Caco-2 (cell line): ENCODE measurements at regions of chr9 and their contacts with region 1.

Region 1: GRCh38 chr9:72038890-72039410 is 21.5 kb downstream of the C9orf57 start:
- DNase-seq: peak; percentile 45 to 57
- H3K4me3 ChIP-seq: no peak overlapping the region
- H3K4me3 Mint-ChIP-seq: no peak overlapping the region
- H3K27ac Mint-ChIP-seq: no peak overlapping the region
- H3K4me1 ChIP-seq: no peaks in the 10 kb centered on the region
- H3K4me1 Mint-ChIP-seq: no peaks in the 10 kb centered on the region
- H3K27me3 ChIP-seq: no peaks in the 10 kb centered on the region
- H3K27me3 Mint-ChIP-seq: no peaks in the 10 kb centered on the region
- CTCF ChIP-seq: peak; percentile 47 to 51

Region 2: DNA sequence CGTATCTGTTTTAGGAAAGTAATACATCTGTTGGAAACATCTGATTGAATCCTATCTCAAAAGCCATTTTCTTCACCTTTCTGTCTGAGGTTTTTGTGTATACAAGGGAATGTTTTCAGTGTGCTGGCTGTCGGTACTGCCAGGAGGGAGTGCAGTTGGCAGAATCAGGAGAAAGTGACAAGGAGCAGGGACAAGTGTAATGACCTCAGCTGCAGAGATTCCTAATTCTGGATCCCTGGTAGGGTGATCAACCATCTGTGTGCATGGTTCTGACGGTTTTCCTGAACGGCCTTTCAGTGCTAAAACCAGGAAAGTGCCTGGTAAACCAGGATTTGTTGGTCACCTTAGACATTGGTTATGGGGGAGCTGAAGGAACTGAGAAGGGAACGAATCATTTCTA is 108.7 kb after region 1 on chr9:
- CTCF ChIA-PET with region 1: interaction called, 4 read pairs
- POLR2A ChIA-PET with region 1: no interaction called
- intact Hi-C with region 1: loop called (anchors 1 kb)
- DNase-seq: no peak
- H3K4me3 ChIP-seq: no peak overlapping the region
- H3K4me3 Mint-ChIP-seq: no peak overlapping the region
- H3K27ac Mint-ChIP-seq: no peak overlapping the region
- H3K4me1 ChIP-seq: no peaks in the 10 kb centered on the region
- H3K4me1 Mint-ChIP-seq: no peaks in the 10 kb centered on the region
- H3K27me3 ChIP-seq: no peaks in the 10 kb centered on the region
- H3K27me3 Mint-ChIP-seq: no peaks in the 10 kb centered on the region
- CTCF ChIP-seq: no peak

Region 3: GRCh38 chr9:72203205-72203803 is 164.4 kb after region 1 on chr9:
- CTCF ChIA-PET with region 1: no interaction called
- POLR2A ChIA-PET with region 1: no interaction called
- intact Hi-C with region 1: loop called (anchors 5 kb)
- DNase-seq: peak in 1 of 2 experiments; percentile 11
- H3K4me3 ChIP-seq: no peak overlapping the region
- H3K4me3 Mint-ChIP-seq: no peak overlapping the region
- H3K27ac Mint-ChIP-seq: no peak overlapping the region
- H3K4me1 ChIP-seq: no peaks in the 10 kb centered on the region
- H3K4me1 Mint-ChIP-seq: peaks cover 12% of the 10 kb centered on the region
- H3K27me3 ChIP-seq: no peaks in the 10 kb centered on the region
- H3K27me3 Mint-ChIP-seq: no peaks in the 10 kb centered on the region
- CTCF ChIP-seq: peak; percentile 27 to 37

Region 4: GRCh38 chr9:72271613-72272478 is 232.9 kb after region 1 on chr9:
- CTCF ChIA-PET with region 1: interaction called, 12 read pairs
- POLR2A ChIA-PET with region 1: no interaction called
- intact Hi-C with region 1: loop called (anchors 1 kb)
- DNase-seq: peak in 1 of 2 experiments; percentile 7
- H3K4me3 ChIP-seq: no peak overlapping the region
- H3K4me3 Mint-ChIP-seq: no peak overlapping the region
- H3K27ac Mint-ChIP-seq: no peak overlapping the region
- H3K4me1 ChIP-seq: no peaks in the 10 kb centered on the region
- H3K4me1 Mint-ChIP-seq: no peaks in the 10 kb centered on the region
- H3K27me3 ChIP-seq: no peaks in the 10 kb centered on the region
- H3K27me3 Mint-ChIP-seq: no peaks in the 10 kb centered on the region
- CTCF ChIP-seq: peak in 1 of 2 experiments; percentile 43

Region 5: GRCh38 chr9:72396247-72397091 is 357.5 kb after region 1 on chr9:
- CTCF ChIA-PET with region 1: no interaction called
- POLR2A ChIA-PET with region 1: no interaction called
- intact Hi-C with region 1: no loop called
- DNase-seq: peak in 1 of 2 experiments; percentile 0
- H3K4me3 ChIP-seq: no peak overlapping the region
- H3K4me3 Mint-ChIP-seq: no peak overlapping the region
- H3K27ac Mint-ChIP-seq: no peak overlapping the region
- H3K4me1 ChIP-seq: no peaks in the 10 kb centered on the region
- H3K4me1 Mint-ChIP-seq: no peaks in the 10 kb centered on the region
- H3K27me3 ChIP-seq: no peaks in the 10 kb centered on the region
- H3K27me3 Mint-ChIP-seq: no peaks in the 10 kb centered on the region
- CTCF ChIP-seq: no peak